ENCODE measurements at regions of chr18 and their contacts with region 1.

Region 1: DNA sequence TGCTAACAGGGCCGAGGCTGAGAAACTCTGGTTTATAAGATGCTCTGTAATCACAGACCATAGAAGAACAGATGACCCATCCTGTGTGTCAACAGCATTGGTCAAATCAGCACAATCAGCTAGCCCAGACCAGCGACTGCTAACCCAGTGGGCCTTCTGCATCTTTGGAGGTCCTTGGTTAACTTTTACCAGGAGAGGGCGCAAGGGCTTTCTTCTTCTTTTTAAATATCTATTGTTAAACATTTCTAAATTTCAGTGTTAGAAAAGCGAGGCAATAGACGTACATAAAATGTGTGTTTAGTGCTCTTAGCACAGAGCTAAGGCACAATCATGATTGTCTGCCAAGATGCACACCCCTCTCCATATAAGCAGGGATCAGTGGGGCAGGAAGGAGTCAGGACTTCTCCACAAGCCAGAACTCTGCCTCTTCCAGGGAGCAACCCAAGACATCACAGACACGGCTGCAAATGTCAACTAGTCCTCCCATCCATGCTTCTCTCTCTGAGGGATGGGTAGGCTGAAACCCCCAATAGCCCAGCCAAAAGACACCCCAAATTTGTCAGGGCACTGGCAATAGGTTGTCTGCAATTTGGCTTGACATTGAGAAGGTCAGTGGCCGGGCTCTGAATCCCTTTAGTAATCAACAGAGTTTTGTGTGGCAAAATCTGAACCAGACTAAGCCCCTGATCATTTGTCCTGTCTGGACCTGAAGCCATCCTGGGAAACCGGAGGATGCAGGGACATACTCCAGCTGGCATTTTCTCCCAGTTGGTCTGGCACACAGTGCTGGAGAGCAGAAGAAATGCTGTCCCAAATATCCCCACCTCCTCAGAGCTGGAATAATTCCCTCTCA is 188.2 kb downstream of the BCL2 start:
- DNase-seq: peak in 4 of 5 donors; percentile 53 to 80 (median 62)
- H3K4me3 ChIP-seq: no peak overlapping the region
- H3K27ac ChIP-seq: peak overlapping the region in 1 of 2 donors; percentile 47
- H3K4me1 ChIP-seq: peaks cover 2% of the 10 kb centered on the region
- H3K27me3 ChIP-seq: no peaks in the 10 kb centered on the region
- CTCF ChIP-seq: peak; percentile 27 to 81 (median 76)
- EP300 ChIP-seq: no peak
- POLR2A ChIP-seq: no peak

Region 2: GRCh38 chr18:61459896-61460648 is 1671.3 kb before region 1 on chr18:
- intact Hi-C with region 1: no loop called
- DNase-seq: no peak
- H3K4me3 ChIP-seq: no peak overlapping the region
- H3K27ac ChIP-seq: no peak overlapping the region
- H3K4me1 ChIP-seq: no peaks in the 10 kb centered on the region
- H3K27me3 ChIP-seq: no peaks in the 10 kb centered on the region
- CTCF ChIP-seq: no peak
- EP300 ChIP-seq: no peak
- POLR2A ChIP-seq: no peak

Region 3: GRCh38 chr18:63025251-63026090 is 105.9 kb before region 1 on chr18:
- intact Hi-C with region 1: loop called in 1 of 4 experiments (anchors 5 kb)
- DNase-seq: peak in 1 of 5 donors; percentile 26
- H3K4me3 ChIP-seq: no peak overlapping the region
- H3K27ac ChIP-seq: no peak overlapping the region
- H3K4me1 ChIP-seq: no peaks in the 10 kb centered on the region
- H3K27me3 ChIP-seq: no peaks in the 10 kb centered on the region
- CTCF ChIP-seq: no peak
- EP300 ChIP-seq: no peak
- POLR2A ChIP-seq: no peak

Region 4: GRCh38 chr18:63224630-63225029 is 93.3 kb after region 1 on chr18:
- intact Hi-C with region 1: loop called in 1 of 4 experiments (anchors 10 kb)
- DNase-seq: no peak
- H3K4me3 ChIP-seq: no peak overlapping the region
- H3K27ac ChIP-seq: no peak overlapping the region
- H3K4me1 ChIP-seq: peaks cover 4% of the 10 kb centered on the region
- H3K27me3 ChIP-seq: no peaks in the 10 kb centered on the region
- CTCF ChIP-seq: no peak
- EP300 ChIP-seq: no peak
- POLR2A ChIP-seq: no peak